H1 (cell line): ENCODE measurements at regions of chr5 and their contacts with region 1.

Region 1: DNA sequence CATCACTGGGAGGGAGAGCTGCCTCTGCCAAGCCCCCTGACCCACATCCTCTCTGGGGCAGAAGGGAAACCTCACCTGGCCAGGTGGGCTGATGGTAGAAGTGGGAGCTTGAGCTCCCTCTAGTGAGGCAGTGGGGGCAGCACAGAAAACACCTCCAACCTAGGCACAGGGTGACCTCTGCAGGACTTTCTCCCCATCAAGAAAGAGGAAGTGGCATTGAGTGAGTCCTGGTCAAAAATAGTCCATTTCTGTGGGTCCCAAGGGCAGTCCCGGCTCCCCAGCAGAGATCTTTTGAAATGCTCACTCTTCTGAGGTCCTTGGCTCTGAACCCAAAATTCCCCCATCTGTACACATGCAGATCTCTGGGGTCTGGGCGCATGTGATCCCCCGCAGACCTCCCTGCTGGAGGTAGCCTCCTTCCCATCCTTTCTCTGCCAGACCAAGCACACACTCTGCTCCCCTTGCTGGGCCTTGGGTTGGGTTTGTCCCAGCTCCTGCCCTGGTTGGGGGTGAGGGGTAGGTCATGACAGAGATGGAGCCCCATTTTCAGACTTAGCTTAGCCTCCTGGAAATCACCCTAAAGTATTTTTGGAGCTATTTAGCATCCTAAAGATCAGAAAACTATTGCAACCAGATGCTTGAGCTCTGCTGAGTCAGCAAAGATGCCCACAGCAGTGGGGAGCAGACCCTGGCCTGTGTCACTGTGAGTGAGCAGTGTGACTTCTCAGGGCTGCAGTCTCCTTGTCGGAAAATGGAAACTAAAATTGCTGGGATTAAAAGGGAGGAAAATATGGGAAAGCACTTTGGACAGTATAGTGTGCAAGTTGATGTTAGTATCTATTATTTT is 41.6 kb upstream of the LCP2 start:
- DNase-seq: peak in 1 of 2 experiments; percentile 72
- H3K4me3 ChIP-seq: no peak overlapping the region
- H3K27ac ChIP-seq: no peak overlapping the region
- H3K4me1 ChIP-seq: peaks cover 6 to 15% (median 11%) of the 10 kb centered on the region in 4 experiments; a peak in 6 of 7 replicates
- H3K27me3 ChIP-seq: no peaks in the 10 kb centered on the region
- CTCF ChIP-seq: peak; percentile 91 to 99 (median 92)
- EP300 ChIP-seq: no peak
- POLR2A ChIP-seq: no peak
- RAD21 ChIP-seq: peak; percentile 89 to 91

Region 2: GRCh38 chr5:170235876-170236864 is 103.0 kb before region 1 on chr5:
- CTCF ChIA-PET with region 1: interaction called, 10 read pairs
- POLR2A ChIA-PET with region 1: interaction called, 3 read pairs
- DNase-seq: no peak
- H3K4me3 ChIP-seq: no peak overlapping the region
- H3K27ac ChIP-seq: no peak overlapping the region
- H3K4me1 ChIP-seq: no peaks in the 10 kb centered on the region
- H3K27me3 ChIP-seq: no peaks in the 10 kb centered on the region
- CTCF ChIP-seq: no peak
- EP300 ChIP-seq: no peak
- POLR2A ChIP-seq: no peak
- RAD21 ChIP-seq: no peak

Region 3: GRCh38 chr5:170267431-170268152 is 71.6 kb before region 1 on chr5:
- CTCF ChIA-PET with region 1: interaction called, 77 read pairs
- POLR2A ChIA-PET with region 1: no interaction called
- DNase-seq: peak in 1 of 2 experiments; percentile 83
- H3K4me3 ChIP-seq: no peak overlapping the region
- H3K27ac ChIP-seq: no peak overlapping the region
- H3K4me1 ChIP-seq: peaks cover 6 to 11% (median 8%) of the 10 kb centered on the region in 4 experiments; a peak in 4 of 7 replicates
- H3K27me3 ChIP-seq: no peaks in the 10 kb centered on the region; a peak in 1 of 7 replicates
- CTCF ChIP-seq: peak; percentile 85 to 93 (median 89)
- EP300 ChIP-seq: no peak
- POLR2A ChIP-seq: no peak
- RAD21 ChIP-seq: peak; percentile 74 to 80

Region 4: GRCh38 chr5:170293273-170293672 is 45.9 kb before region 1 on chr5:
- CTCF ChIA-PET with region 1: interaction called, 14 read pairs
- POLR2A ChIA-PET with region 1: no interaction called
- DNase-seq: no peak
- H3K4me3 ChIP-seq: no peak overlapping the region
- H3K27ac ChIP-seq: no peak overlapping the region
- H3K4me1 ChIP-seq: peaks cover 0 to 3% (median 1%) of the 10 kb centered on the region in 4 experiments; a peak in 2 of 7 replicates
- H3K27me3 ChIP-seq: peaks cover 0 to 1% (median 0%) of the 10 kb centered on the region in 4 experiments; a peak in 2 of 7 replicates
- CTCF ChIP-seq: no peak
- EP300 ChIP-seq: no peak
- POLR2A ChIP-seq: no peak
- RAD21 ChIP-seq: peak in 1 of 2 experiments; percentile 7; a peak in 1 of 4 replicates

Region 5: GRCh38 chr5:170327168-170327567 is 12.0 kb before region 1 on chr5:
- CTCF ChIA-PET with region 1: interaction called, 10 read pairs
- POLR2A ChIA-PET with region 1: no interaction called
- DNase-seq: no peak
- H3K4me3 ChIP-seq: no peak overlapping the region
- H3K27ac ChIP-seq: no peak overlapping the region
- H3K4me1 ChIP-seq: peaks cover 0 to 5% (median 2%) of the 10 kb centered on the region in 4 experiments; a peak in 4 of 7 replicates
- H3K27me3 ChIP-seq: no peaks in the 10 kb centered on the region
- CTCF ChIP-seq: no peak
- EP300 ChIP-seq: no peak
- POLR2A ChIP-seq: no peak
- RAD21 ChIP-seq: no peak

Region 6: GRCh38 chr5:170388818-170389549 is 49.8 kb after region 1 on chr5 and contains the start of gene KCNMB1:
- CTCF ChIA-PET with region 1: interaction called, 13 read pairs
- POLR2A ChIA-PET with region 1: no interaction called
- DNase-seq: no peak
- H3K4me3 ChIP-seq: no peak within 1 kb of the TSS
- H3K27ac ChIP-seq: no peak within 1 kb of the TSS
- H3K4me1 ChIP-seq: peaks cover 0 to 21% (median 9%) of the 10 kb centered on the region in 4 experiments; a peak in 4 of 7 replicates
- H3K27me3 ChIP-seq: no peaks in the 10 kb centered on the region; a peak in 1 of 7 replicates
- CTCF ChIP-seq: no peak
- EP300 ChIP-seq: no peak
- POLR2A ChIP-seq: no peak
- RAD21 ChIP-seq: no peak
- total RNA-seq, gene KCNMB1: 0.10 and 0.19 TPM in 2 replicates

Region 7: GRCh38 chr5:170429014-170429413 is 89.9 kb after region 1 on chr5:
- CTCF ChIA-PET with region 1: interaction called, 10 read pairs
- POLR2A ChIA-PET with region 1: no interaction called
- DNase-seq: no peak
- H3K4me3 ChIP-seq: no peak overlapping the region
- H3K27ac ChIP-seq: no peak overlapping the region
- H3K4me1 ChIP-seq: peaks cover 0 to 6% (median 2%) of the 10 kb centered on the region in 4 experiments; a peak in 1 of 7 replicates
- H3K27me3 ChIP-seq: no peaks in the 10 kb centered on the region; a peak in 1 of 7 replicates
- CTCF ChIP-seq: peak; percentile 38 to 50 (median 40); a peak in 3 of 4 replicates
- EP300 ChIP-seq: no peak
- POLR2A ChIP-seq: no peak
- RAD21 ChIP-seq: peak in 1 of 2 experiments; percentile 49; a peak in 2 of 4 replicates

Region 8: DNA sequence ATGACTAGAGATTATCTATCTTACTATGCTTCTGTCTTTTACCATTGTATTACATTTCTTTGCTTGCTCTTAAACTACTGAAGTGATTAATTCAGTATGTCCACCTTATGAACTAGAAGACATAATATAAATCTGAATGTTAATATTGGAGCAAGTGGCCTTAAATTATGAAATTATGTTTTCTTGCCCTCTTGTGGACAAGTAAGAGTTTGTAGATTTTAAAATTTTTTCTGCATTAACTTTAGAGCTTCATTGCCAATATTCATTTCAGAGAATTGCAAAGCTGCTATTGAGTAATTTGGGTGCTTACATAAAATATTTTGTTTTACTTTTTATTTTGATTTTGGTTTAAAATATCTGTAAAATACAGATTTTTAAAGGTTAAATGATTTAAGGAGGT is 578.0 kb after region 1 on chr5:
- CTCF ChIA-PET with region 1: no interaction called
- POLR2A ChIA-PET with region 1: no interaction called
- DNase-seq: no peak
- H3K4me3 ChIP-seq: no peak overlapping the region
- H3K27ac ChIP-seq: no peak overlapping the region
- H3K4me1 ChIP-seq: no peaks in the 10 kb centered on the region
- H3K27me3 ChIP-seq: no peaks in the 10 kb centered on the region
- CTCF ChIP-seq: no peak
- EP300 ChIP-seq: no peak
- POLR2A ChIP-seq: no peak
- RAD21 ChIP-seq: no peak